Ascending aorta (tissue), 2 donors: ENCODE measurements at regions of chr4 and their contacts with region 1.

Region 1: GRCh38 chr4:26459756-26460530 is 30.3 kb downstream of the CCKAR start:
- DNase-seq: no peak
- H3K4me3 ChIP-seq: no peak overlapping the region
- H3K27ac ChIP-seq: no peak overlapping the region
- H3K4me1 ChIP-seq: no peaks in the 10 kb centered on the region
- H3K27me3 ChIP-seq: no peaks in the 10 kb centered on the region
- CTCF ChIP-seq: no peak

Region 2: DNA sequence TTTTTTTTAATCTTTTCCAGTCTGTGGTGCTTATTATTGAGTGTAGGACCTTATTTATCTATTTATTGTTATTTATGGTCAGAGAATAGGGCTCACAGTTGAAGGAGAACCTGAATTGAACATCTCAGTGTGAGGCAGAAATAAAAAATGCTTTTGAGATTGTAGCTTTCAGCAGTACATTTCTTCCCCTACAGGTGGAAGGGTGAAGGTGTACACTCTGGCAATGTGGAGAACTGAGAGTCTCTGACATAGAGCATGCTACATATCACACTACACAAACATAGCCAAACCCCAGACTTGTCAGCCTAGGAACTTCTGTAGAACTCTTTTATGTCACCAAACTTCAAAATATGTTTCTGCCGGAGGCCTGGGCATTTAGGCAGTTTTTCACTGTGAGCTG is 540.9 kb after region 1 on chr4:
- intact Hi-C with region 1: loop called (anchors 5 kb)
- DNase-seq: no peak
- H3K4me3 ChIP-seq: no peak overlapping the region
- H3K27ac ChIP-seq: no peak overlapping the region
- H3K4me1 ChIP-seq: peaks cover 0 to 2% of the 10 kb centered on the region in 2 donors
- H3K27me3 ChIP-seq: no peaks in the 10 kb centered on the region
- CTCF ChIP-seq: no peak